ENCODE measurements at regions of chr1 and their contacts with region 1.

Region 1: DNA sequence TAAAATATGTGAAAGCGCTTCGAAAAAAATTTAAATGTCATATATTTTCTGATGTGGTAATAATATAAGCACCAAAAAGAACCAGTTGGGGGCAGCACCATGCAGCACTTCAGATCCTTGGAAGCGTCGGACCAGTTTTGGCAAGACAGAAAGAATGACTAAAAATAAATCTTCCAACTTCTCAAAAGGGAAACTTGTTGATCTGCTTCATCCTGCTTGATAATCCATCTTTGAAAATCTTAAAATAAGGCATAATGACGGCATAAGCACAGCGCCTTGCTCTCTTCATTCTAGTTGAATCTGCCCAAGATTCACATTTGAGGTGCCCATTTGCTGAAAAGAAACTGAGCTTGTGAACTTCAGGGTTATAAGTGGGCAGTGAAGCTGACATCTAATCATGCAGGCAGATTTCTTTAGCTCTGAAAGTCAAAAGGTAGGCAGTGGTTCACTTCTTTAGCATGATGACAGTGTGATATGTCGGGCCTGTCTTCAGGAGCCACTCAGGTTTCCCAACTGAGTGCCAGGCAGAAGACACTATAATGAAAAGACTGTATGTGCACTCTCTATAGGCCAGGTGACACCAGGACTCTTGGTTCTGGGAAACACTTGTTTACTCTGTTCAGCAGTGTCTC is 19.8 kb upstream of the MUTYH start:
- DNase-seq: peak; percentile 68
- ATAC-seq: peak; percentile 74
- H3K4me3 Mint-ChIP-seq: no peak overlapping the region
- H3K27ac Mint-ChIP-seq: no peak overlapping the region
- H3K4me1 Mint-ChIP-seq: peaks cover 6% of the 10 kb centered on the region
- H3K27me3 Mint-ChIP-seq: no peaks in the 10 kb centered on the region

Region 2: GRCh38 chr1:45079533-45079932 is 280.5 kb before region 1 on chr1:
- CTCF ChIA-PET with region 1: no interaction called
- POLR2A ChIA-PET with region 1: no interaction called
- DNase-seq: no peak
- ATAC-seq: no peak
- H3K4me3 Mint-ChIP-seq: no peak overlapping the region
- H3K27ac Mint-ChIP-seq: peak overlapping the region; percentile 26
- H3K4me1 Mint-ChIP-seq: peaks cover 10% of the 10 kb centered on the region
- H3K27me3 Mint-ChIP-seq: peaks cover 19% of the 10 kb centered on the region

Region 3: GRCh38 chr1:45230540-45230939 is 129.5 kb before region 1 on chr1:
- CTCF ChIA-PET with region 1: no interaction called
- POLR2A ChIA-PET with region 1: no interaction called
- DNase-seq: no peak
- ATAC-seq: no peak
- H3K4me3 Mint-ChIP-seq: no peak overlapping the region
- H3K27ac Mint-ChIP-seq: no peak overlapping the region
- H3K4me1 Mint-ChIP-seq: no peaks in the 10 kb centered on the region
- H3K27me3 Mint-ChIP-seq: peaks cover 2% of the 10 kb centered on the region

Region 4: DNA sequence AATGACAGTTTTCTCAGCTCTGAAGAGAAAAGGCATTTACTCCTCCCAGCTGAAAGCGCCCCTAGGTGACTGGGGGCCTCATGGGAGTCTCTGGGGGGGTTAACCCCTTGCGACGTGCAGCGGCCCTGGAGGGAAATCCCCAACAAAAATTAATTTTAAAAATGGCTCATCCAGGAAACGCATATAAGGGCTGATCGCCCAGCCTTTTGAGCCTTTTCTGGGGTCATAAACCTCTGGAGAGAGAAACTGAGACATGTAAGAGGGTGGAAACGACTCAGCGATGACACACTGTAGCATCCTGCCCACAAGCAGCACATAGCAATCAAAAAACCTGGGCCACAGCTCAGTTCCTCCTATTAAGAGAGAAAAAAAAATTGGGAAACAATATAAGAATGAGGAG is 53.7 kb before region 1 on chr1:
- CTCF ChIA-PET with region 1: no interaction called
- POLR2A ChIA-PET with region 1: no interaction called
- DNase-seq: peak; percentile 58
- ATAC-seq: no peak
- H3K4me3 Mint-ChIP-seq: peak overlapping the region; percentile 45
- H3K27ac Mint-ChIP-seq: peak overlapping the region; percentile 31
- H3K4me1 Mint-ChIP-seq: peaks cover 35% of the 10 kb centered on the region
- H3K27me3 Mint-ChIP-seq: no peaks in the 10 kb centered on the region

Region 5: GRCh38 chr1:45348716-45349677 is 11.0 kb before region 1 on chr1:
- CTCF ChIA-PET with region 1: interaction called, 17 read pairs
- POLR2A ChIA-PET with region 1: no interaction called
- DNase-seq: no peak
- ATAC-seq: no peak
- H3K4me3 Mint-ChIP-seq: no peak overlapping the region
- H3K27ac Mint-ChIP-seq: peak overlapping the region; percentile 60
- H3K4me1 Mint-ChIP-seq: peaks cover 27% of the 10 kb centered on the region
- H3K27me3 Mint-ChIP-seq: no peaks in the 10 kb centered on the region

Region 6: GRCh38 chr1:45373573-45373972 is 13.6 kb after region 1 on chr1:
- CTCF ChIA-PET with region 1: interaction called, 15 read pairs
- POLR2A ChIA-PET with region 1: no interaction called
- DNase-seq: no peak
- ATAC-seq: no peak
- H3K4me3 Mint-ChIP-seq: no peak overlapping the region
- H3K27ac Mint-ChIP-seq: no peak overlapping the region
- H3K4me1 Mint-ChIP-seq: peaks cover 4% of the 10 kb centered on the region
- H3K27me3 Mint-ChIP-seq: no peaks in the 10 kb centered on the region

Region 7: GRCh38 chr1:45490626-45491486 is 130.9 kb after region 1 on chr1 and contains the start of gene TESK2:
- CTCF ChIA-PET with region 1: interaction called, 218 read pairs
- POLR2A ChIA-PET with region 1: interaction called, 7 read pairs
- DNase-seq: peak; percentile 98
- ATAC-seq: peak; percentile 99
- H3K4me3 Mint-ChIP-seq: no peak within 1 kb of the TSS
- H3K27ac Mint-ChIP-seq: no peak within 1 kb of the TSS
- H3K4me1 Mint-ChIP-seq: peaks cover 12% of the 10 kb centered on the region
- H3K27me3 Mint-ChIP-seq: peaks cover 5% of the 10 kb centered on the region
- total RNA-seq, gene TESK2: 3.3 to 3.5 TPM

Region 8: GRCh38 chr1:45499415-45499769 is 139.4 kb after region 1 on chr1:
- CTCF ChIA-PET with region 1: interaction called, 218 read pairs
- POLR2A ChIA-PET with region 1: no interaction called
- DNase-seq: no peak
- ATAC-seq: peak; percentile 7
- H3K4me3 Mint-ChIP-seq: peak overlapping the region; percentile 94
- H3K27ac Mint-ChIP-seq: peak overlapping the region; percentile 89
- H3K4me1 Mint-ChIP-seq: peaks cover 28% of the 10 kb centered on the region
- H3K27me3 Mint-ChIP-seq: no peaks in the 10 kb centered on the region

Measured in activated CD8-positive, alpha-beta T cell treated with anti-CD3 and anti-CD28 coated beads, Interleukin-2, amount 10 ng/mL, durations not matched to agents 7 days and 5 days (primary cell).